CD4-positive, alpha-beta T cell (primary cell): ENCODE measurements at regions of chr2 and their contacts with region 1.

Region 1: GRCh38 chr2:202265467-202266277 is at the start of gene NOP58:
- DNase-seq: peak; percentile 75 to 97 (median 84)
- ATAC-seq: peak; percentile 80
- H3K4me3 ChIP-seq: peak within 1 kb of the TSS; percentile 97
- H3K4me3 Mint-ChIP-seq: peak within 1 kb of the TSS; percentile 80
- H3K27ac ChIP-seq: peak within 1 kb of the TSS; percentile 97 to 99
- H3K27ac Mint-ChIP-seq: no peak within 1 kb of the TSS
- H3K4me1 ChIP-seq: peaks cover 29% of the 10 kb centered on the region
- H3K4me1 Mint-ChIP-seq: peaks cover 21% of the 10 kb centered on the region
- H3K27me3 ChIP-seq: no peaks in the 10 kb centered on the region
- H3K27me3 Mint-ChIP-seq: no peaks in the 10 kb centered on the region
- CTCF ChIP-seq: no peak
- total RNA-seq, gene NOP58: 280 to 288 TPM

Region 2: GRCh38 chr2:201780674-201781581 is 484.7 kb before region 1 on chr2 and contains the start of gene ALS2:
- CTCF ChIA-PET with region 1: no interaction called
- POLR2A ChIA-PET with region 1: interaction called, 3 read pairs
- intact Hi-C with region 1: loop called in 1 of 2 experiments (anchors 5 kb)
- DNase-seq: peak; percentile 86 to 96 (median 92)
- ATAC-seq: peak; percentile 90
- H3K4me3 ChIP-seq: peak within 1 kb of the TSS; percentile 66
- H3K4me3 Mint-ChIP-seq: peak within 1 kb of the TSS; percentile 98
- H3K27ac ChIP-seq: peak within 1 kb of the TSS; percentile 77 to 88
- H3K27ac Mint-ChIP-seq: peak within 1 kb of the TSS; percentile 93
- H3K4me1 ChIP-seq: peaks cover 15% of the 10 kb centered on the region
- H3K4me1 Mint-ChIP-seq: peaks cover 20% of the 10 kb centered on the region
- H3K27me3 ChIP-seq: no peaks in the 10 kb centered on the region
- H3K27me3 Mint-ChIP-seq: no peaks in the 10 kb centered on the region
- CTCF ChIP-seq: no peak
- total RNA-seq, gene ALS2: 7.0 to 7.2 TPM

Region 3: DNA sequence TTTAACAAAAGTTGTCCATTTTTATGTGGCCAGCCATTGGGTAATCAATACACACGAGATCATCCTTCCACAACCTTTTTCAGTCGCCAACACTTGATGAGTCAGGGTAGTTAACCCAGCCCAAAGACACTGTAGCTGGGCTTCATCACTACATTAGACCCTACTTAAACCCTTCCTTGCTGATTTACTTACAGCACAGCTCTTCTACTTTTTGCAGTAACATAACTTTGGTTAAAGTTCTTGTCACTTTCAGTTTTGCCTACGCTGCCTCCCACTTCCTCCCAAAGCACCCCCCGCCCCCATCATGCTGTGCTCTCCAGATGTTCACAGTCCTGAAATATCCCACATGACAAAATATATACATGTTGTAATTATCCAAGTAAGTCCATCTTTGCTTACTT is 355.7 kb before region 1 on chr2:
- CTCF ChIA-PET with region 1: no interaction called
- POLR2A ChIA-PET with region 1: no interaction called
- intact Hi-C with region 1: no loop called
- DNase-seq: peak in 1 of 14 experiments; percentile 14
- ATAC-seq: no peak
- H3K4me3 ChIP-seq: no peak overlapping the region
- H3K4me3 Mint-ChIP-seq: no peak overlapping the region
- H3K27ac ChIP-seq: no peak overlapping the region
- H3K27ac Mint-ChIP-seq: no peak overlapping the region
- H3K4me1 ChIP-seq: peaks cover 9% of the 10 kb centered on the region
- H3K4me1 Mint-ChIP-seq: peaks cover 12% of the 10 kb centered on the region
- H3K27me3 ChIP-seq: no peaks in the 10 kb centered on the region
- H3K27me3 Mint-ChIP-seq: peaks cover 4% of the 10 kb centered on the region
- CTCF ChIP-seq: no peak

Region 4: GRCh38 chr2:202238234-202239197 is 27.2 kb before region 1 on chr2 and contains the start of gene SUMO1:
- CTCF ChIA-PET with region 1: interaction called, 3 read pairs
- POLR2A ChIA-PET with region 1: interaction called, 34 read pairs
- intact Hi-C with region 1: loop called (anchors 1 kb)
- DNase-seq: peak; percentile 79 to 95 (median 91)
- ATAC-seq: peak; percentile 92
- H3K4me3 ChIP-seq: peak within 1 kb of the TSS; percentile 85
- H3K4me3 Mint-ChIP-seq: peak within 1 kb of the TSS; percentile 98
- H3K27ac ChIP-seq: peak within 1 kb of the TSS; percentile 81 to 88
- H3K27ac Mint-ChIP-seq: peak within 1 kb of the TSS; percentile 98
- H3K4me1 ChIP-seq: peaks cover 23% of the 10 kb centered on the region
- H3K4me1 Mint-ChIP-seq: peaks cover 43% of the 10 kb centered on the region
- H3K27me3 ChIP-seq: no peaks in the 10 kb centered on the region
- H3K27me3 Mint-ChIP-seq: no peaks in the 10 kb centered on the region
- CTCF ChIP-seq: no peak
- total RNA-seq, gene SUMO1: 72.1 to 72.9 TPM

Region 5: DNA sequence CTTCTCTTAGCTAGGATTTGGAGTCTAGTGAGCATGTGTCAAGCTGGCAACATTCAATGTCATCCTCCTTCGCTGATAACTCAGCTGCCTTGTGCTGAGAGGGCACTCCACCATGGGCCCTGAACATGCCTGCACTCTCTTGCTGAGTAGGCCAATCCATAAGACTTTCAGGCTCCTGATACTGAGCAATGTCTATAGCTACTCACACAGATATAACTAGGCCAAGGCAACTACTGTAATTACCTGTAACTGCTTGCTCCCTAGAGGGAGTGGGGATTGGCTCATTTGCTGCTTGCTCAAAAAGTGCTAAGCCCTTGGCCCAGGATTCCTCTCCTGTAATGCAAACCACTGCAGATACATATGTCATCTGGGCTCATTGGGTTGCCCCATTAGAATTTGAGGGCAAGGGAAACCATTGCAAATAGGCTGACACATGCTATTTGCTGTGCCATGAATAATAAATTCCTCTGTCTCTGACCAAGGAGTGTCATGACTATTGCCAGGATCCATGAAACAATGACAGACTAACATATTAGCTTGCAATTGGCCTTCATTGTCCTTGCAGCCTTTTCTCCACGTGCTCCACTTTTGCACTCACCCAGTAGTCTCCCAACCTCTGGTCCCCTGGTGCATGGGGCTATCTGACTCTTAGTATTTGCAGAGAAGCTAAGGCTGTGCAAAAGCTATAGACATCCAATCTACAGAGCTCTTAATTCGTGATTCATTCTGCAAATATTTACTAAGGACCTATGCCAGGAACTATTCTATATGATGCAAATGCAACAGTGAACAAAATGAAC is 73.6 kb after region 1 on chr2:
- CTCF ChIA-PET with region 1: no interaction called
- POLR2A ChIA-PET with region 1: no interaction called
- intact Hi-C with region 1: no loop called
- DNase-seq: no peak
- ATAC-seq: no peak
- H3K4me3 ChIP-seq: no peak overlapping the region
- H3K4me3 Mint-ChIP-seq: no peak overlapping the region
- H3K27ac ChIP-seq: no peak overlapping the region
- H3K27ac Mint-ChIP-seq: no peak overlapping the region
- H3K4me1 ChIP-seq: no peaks in the 10 kb centered on the region
- H3K4me1 Mint-ChIP-seq: no peaks in the 10 kb centered on the region
- H3K27me3 ChIP-seq: no peaks in the 10 kb centered on the region
- H3K27me3 Mint-ChIP-seq: no peaks in the 10 kb centered on the region
- CTCF ChIP-seq: no peak

Region 6: DNA sequence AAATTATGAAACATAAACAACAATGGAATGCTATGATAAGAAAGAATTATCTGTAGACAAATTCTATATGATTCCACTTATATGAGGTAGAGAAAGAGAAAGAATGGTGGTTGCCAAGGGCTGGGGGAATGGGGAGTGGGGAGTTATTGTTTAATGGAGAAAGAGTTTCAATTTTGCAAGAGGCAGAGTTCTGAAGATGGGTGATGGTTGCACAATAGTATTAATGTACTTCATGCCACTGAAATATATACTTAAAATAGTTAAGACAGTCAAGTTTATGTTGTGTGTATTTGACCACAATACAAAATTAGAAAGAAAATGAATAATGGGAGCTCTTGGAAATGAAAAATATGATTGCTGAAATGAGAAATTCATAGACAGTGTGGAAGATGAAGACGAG is 346.5 kb after region 1 on chr2:
- CTCF ChIA-PET with region 1: no interaction called
- POLR2A ChIA-PET with region 1: no interaction called
- intact Hi-C with region 1: no loop called
- DNase-seq: no peak
- ATAC-seq: no peak
- H3K4me3 ChIP-seq: no peak overlapping the region
- H3K4me3 Mint-ChIP-seq: no peak overlapping the region
- H3K27ac ChIP-seq: no peak overlapping the region
- H3K27ac Mint-ChIP-seq: no peak overlapping the region
- H3K4me1 ChIP-seq: no peaks in the 10 kb centered on the region
- H3K4me1 Mint-ChIP-seq: peaks cover 7% of the 10 kb centered on the region
- H3K27me3 ChIP-seq: no peaks in the 10 kb centered on the region
- H3K27me3 Mint-ChIP-seq: no peaks in the 10 kb centered on the region
- CTCF ChIP-seq: no peak

Region 7: GRCh38 chr2:202911512-202912341 is 646.1 kb after region 1 on chr2 and contains the starts of genes CARF and WDR12:
- CTCF ChIA-PET with region 1: no interaction called
- POLR2A ChIA-PET with region 1: no interaction called
- intact Hi-C with region 1: loop called in 1 of 2 experiments (anchors 10 kb)
- DNase-seq: peak; percentile 80 to 95 (median 86)
- ATAC-seq: peak; percentile 81
- H3K4me3 ChIP-seq: peak within 1 kb of the TSS; percentile 79
- H3K4me3 Mint-ChIP-seq: peak within 1 kb of the TSS; percentile 98
- H3K27ac ChIP-seq: peak within 1 kb of the TSS; percentile 72 to 85
- H3K27ac Mint-ChIP-seq: peak within 1 kb of the TSS; percentile 90
- H3K4me1 ChIP-seq: peaks cover 9% of the 10 kb centered on the region
- H3K4me1 Mint-ChIP-seq: peaks cover 40% of the 10 kb centered on the region
- H3K27me3 ChIP-seq: no peaks in the 10 kb centered on the region
- H3K27me3 Mint-ChIP-seq: no peaks in the 10 kb centered on the region
- CTCF ChIP-seq: no peak
- total RNA-seq, gene CARF: 9.0 to 9.6 TPM
- total RNA-seq, gene WDR12: 6.2 to 7.7 TPM